H1 (cell line): ENCODE measurements at regions of chr9 and their contacts with region 1.

Region 1: GRCh38 chr9:93814077-93814956 is 140.8 kb downstream of the BARX1 start:
- DNase-seq: peak in 1 of 2 experiments; percentile 57
- H3K4me3 ChIP-seq: no peak overlapping the region
- H3K27ac ChIP-seq: no peak overlapping the region
- H3K4me1 ChIP-seq: peaks cover 0 to 24% (median 15%) of the 10 kb centered on the region in 4 experiments; a peak in 6 of 7 replicates
- H3K27me3 ChIP-seq: no peaks in the 10 kb centered on the region; a peak in 2 of 7 replicates
- CTCF ChIP-seq: peak; percentile 49 to 66 (median 64)
- EP300 ChIP-seq: no peak
- POLR2A ChIP-seq: no peak
- RAD21 ChIP-seq: peak; percentile 62 to 76

Region 2: DNA sequence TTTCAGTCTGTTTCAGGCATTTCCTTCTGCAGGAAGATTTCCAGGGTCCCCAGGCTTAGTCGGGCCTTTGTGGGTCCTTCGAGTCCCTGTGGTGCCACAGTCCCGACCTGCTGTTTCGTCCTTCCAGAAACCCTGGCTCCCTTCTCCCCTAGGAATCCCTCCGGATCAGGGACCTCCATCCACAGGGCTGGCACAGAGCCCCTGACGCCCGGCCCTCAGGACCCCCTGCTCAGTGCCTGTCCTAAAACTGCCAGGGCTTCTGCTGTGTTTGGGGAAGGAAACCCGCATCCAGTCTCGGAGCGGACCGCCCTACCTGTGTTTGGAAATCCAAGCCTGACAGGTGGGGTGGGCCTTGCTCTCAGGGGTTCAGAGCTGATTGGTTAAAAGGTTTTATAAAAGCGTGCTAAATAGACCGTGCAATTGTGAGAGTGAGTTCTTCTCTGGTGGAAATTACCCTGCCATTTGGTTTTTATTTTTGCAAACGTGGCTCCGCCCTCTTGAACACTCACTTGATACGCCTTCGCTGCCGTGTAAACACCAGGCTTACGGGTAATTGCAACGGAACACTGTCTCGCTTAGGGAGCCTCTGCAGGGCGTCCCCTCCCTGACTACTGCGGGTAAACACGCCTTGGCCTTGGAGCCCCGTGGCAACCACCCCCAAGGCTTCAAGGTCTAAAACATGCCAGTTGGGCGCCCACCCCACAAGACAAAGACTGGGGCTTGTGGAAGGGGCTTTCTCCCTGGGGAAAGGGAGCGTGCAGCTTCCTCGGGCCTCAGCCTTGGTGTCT is 116.8 kb before region 1 on chr9:
- CTCF ChIA-PET with region 1: no interaction called
- POLR2A ChIA-PET with region 1: no interaction called
- DNase-seq: no peak
- H3K4me3 ChIP-seq: no peak overlapping the region
- H3K27ac ChIP-seq: no peak overlapping the region
- H3K4me1 ChIP-seq: no peaks in the 10 kb centered on the region
- H3K27me3 ChIP-seq: no peaks in the 10 kb centered on the region
- CTCF ChIP-seq: no peak
- EP300 ChIP-seq: no peak
- POLR2A ChIP-seq: no peak
- RAD21 ChIP-seq: no peak

Region 3: DNA sequence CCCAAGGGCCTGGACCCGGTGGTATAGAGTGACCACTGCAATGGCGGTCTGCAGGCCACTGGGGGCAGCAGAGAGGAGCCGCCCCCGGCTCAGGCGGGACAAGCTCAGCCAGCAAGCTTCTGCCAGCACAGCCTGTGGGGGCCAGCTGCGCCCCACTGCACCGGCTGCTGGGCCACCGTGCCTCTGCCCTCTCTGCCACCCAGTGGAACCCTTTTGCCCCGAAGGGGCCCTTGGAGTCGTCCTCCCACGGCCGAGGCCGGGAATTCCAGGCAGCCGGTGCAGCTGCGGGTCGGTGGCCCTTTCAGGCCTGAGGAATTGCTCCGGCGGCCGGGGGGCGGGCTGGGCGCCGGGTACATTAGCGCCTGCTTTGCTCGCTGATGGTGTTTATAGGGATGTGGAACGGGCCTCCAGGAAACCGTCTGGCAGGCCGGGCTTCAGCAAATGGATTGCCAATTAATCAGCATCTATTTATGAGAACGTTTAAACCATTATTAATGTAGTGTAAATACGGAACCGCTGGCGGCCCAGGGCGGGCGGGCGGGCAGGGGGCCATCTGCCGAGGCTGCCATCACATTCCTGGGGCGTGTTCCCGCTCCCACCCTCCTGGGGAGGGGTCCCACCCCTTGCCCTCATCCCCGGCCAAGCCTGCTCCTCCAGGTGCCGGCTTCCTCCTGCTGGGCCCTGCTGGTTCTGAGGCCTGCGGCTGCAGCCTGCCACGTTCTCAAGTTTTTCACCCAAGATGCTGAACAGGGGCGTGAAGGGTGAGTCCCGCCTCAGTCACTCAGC is 13.4 kb after region 1 on chr9:
- CTCF ChIA-PET with region 1: interaction called, 105 read pairs
- POLR2A ChIA-PET with region 1: no interaction called
- DNase-seq: peak in 1 of 2 experiments; percentile 89
- H3K4me3 ChIP-seq: peak overlapping the region in 3 of 4 experiments; percentile 12 to 55 (median 19); a peak in 4 of 8 replicates
- H3K27ac ChIP-seq: no peak overlapping the region
- H3K4me1 ChIP-seq: peaks cover 4 to 15% (median 11%) of the 10 kb centered on the region in 4 experiments; a peak in 6 of 7 replicates
- H3K27me3 ChIP-seq: peaks cover 0 to 9% (median 5%) of the 10 kb centered on the region in 4 experiments; a peak in 3 of 7 replicates
- CTCF ChIP-seq: peak in 2 of 3 experiments; percentile 86 to 92; a peak in 3 of 4 replicates
- EP300 ChIP-seq: no peak
- POLR2A ChIP-seq: no peak
- RAD21 ChIP-seq: peak; percentile 57 to 70